Colonic mucosa (tissue), 4 donors: ENCODE measurements at regions of chr14 and their contacts with region 1.

Region 1: DNA sequence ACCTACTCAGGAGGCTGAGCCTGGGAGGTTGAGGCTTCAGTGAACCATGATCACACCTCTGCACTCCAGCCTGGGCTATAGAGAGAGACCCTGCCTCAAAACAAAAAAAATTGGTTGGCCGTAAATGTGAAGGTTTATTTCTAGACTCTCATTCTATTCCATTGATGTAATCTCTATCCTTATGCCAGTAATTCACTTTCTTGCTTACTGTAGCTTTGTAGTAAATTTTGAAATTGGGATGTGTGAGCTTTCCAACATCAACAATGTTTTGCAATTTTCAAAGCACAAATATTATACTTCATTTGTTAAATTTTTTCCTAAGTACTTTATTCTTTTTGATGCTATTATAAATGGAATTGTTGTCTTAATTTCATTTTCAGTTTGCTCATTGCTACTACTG is 24.6 kb downstream of the LIN52 start:
- DNase-seq: no peak
- H3K4me3 ChIP-seq: no peak overlapping the region
- H3K27ac ChIP-seq: no peak overlapping the region
- H3K4me1 ChIP-seq: no peaks in the 10 kb centered on the region
- H3K27me3 ChIP-seq: no peaks in the 10 kb centered on the region
- CTCF ChIP-seq: no peak

Region 2: DNA sequence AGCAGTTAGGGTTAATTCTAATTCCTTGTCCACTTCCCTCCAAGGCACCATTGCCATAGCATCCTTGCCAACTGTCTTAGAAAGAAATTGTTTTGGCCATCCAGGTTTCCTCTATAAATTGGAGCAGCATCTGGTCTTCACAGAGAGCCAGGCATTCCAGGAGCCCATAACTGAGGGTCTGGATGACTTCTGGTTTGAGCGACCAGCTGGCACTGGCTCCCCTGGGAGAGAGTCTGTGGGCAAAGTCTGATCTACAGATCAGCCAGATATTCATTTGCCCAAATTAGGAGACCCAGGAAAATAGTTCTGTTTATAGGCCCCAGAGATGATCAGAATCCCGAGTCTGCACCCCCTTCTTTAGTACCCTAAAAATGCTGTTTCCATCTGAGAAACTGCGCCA is 145.9 kb after region 1 on chr14:
- intact Hi-C with region 1: loop called (anchors 2 kb)
- DNase-seq: no peak
- H3K4me3 ChIP-seq: no peak overlapping the region
- H3K27ac ChIP-seq: no peak overlapping the region
- H3K4me1 ChIP-seq: no peaks in the 10 kb centered on the region
- H3K27me3 ChIP-seq: peaks cover 9% of the 10 kb centered on the region
- CTCF ChIP-seq: no peak

Region 3: DNA sequence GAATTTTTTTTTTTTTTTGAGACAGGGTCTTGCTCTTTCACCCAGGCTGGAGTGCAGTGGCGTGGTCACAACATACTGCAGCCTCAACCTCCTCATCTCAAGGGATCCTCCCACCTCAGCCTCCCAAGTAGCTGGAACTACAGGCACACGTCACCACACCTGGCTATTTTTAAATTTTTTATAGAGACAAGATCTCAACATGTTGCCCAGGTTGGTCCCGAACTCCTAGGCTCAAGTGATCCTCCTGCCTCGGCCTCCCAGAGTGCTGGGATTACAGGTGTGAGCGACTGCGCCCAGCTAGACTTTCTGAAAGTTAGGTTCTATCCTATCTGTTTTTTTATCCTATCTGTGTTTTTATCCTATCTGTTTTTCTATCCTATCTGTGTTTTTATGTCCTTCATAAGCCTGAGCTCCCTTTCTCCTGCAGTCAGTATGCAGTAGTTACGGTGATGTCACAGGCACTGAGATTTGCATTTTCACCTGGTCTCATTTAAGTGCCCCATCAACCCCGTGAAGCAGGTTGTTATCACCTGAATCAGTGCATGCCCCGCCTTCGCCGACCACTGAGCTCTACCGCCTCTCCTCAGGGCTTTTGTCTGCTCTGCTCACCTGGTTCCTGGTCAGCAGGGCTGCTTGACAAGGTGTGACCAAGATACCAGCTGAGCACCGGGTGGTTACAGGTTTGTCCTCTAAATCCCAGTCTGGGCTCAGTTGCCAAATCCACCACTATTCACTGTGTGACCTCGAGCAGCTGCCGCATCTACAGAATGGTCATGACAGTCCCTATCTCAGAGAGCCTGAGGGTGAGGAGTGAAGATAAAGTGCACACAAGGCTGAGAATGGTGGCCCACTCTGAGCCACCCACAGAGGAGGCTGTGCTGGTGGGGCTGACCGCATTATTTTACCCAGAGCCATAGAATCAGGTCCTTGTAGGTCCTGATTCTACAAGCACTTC is 283.5 kb after region 1 on chr14:
- intact Hi-C with region 1: no loop called
- DNase-seq: no peak
- H3K4me3 ChIP-seq: no peak overlapping the region
- H3K27ac ChIP-seq: no peak overlapping the region
- H3K4me1 ChIP-seq: no peaks in the 10 kb centered on the region
- H3K27me3 ChIP-seq: no peaks in the 10 kb centered on the region
- CTCF ChIP-seq: no peak

Region 4: GRCh38 chr14:74407808-74408154 is 298.4 kb after region 1 on chr14:
- intact Hi-C with region 1: no loop called
- DNase-seq: no peak
- H3K4me3 ChIP-seq: no peak overlapping the region
- H3K27ac ChIP-seq: no peak overlapping the region
- H3K4me1 ChIP-seq: no peaks in the 10 kb centered on the region
- H3K27me3 ChIP-seq: no peaks in the 10 kb centered on the region
- CTCF ChIP-seq: no peak